A549 (cell line): ENCODE measurements at regions of chr17 and their contacts with region 1.

Region 1: GRCh38 chr17:64005734-64006167 is 7.6 kb downstream of the PRR29 start:
- DNase-seq: peak; percentile 56 to 64
- ATAC-seq: peak; percentile 22 to 66; a peak in 4 of 6 replicates
- H3K4me3 ChIP-seq: no peak overlapping the region
- H3K27ac ChIP-seq: peak overlapping the region in 1 of 2 experiments; percentile 49; a peak in 3 of 6 replicates
- H3K4me1 ChIP-seq: peaks cover 28% of the 10 kb centered on the region
- CTCF ChIP-seq: no peak
- EP300 ChIP-seq: 0 out of 5 replicates have a peak, but pooled peaks of 1 of the 2 experiments have one; percentile 11
- POLR2A ChIP-seq: no peak
- RAD21 ChIP-seq: no peak

Region 2: GRCh38 chr17:64020056-64020766 is 14.5 kb after region 1 on chr17 and contains the start of gene ICAM2:
- CTCF ChIA-PET with region 1: interaction called, 107 read pairs
- POLR2A ChIA-PET with region 1: no interaction called
- DNase-seq: no peak
- ATAC-seq: peak in 1 of 2 experiments; percentile 33; a peak in 2 of 6 replicates
- H3K4me3 ChIP-seq: no peak within 1 kb of the TSS
- H3K27ac ChIP-seq: no peak within 1 kb of the TSS
- H3K4me1 ChIP-seq: no peaks in the 10 kb centered on the region
- CTCF ChIP-seq: no peak
- EP300 ChIP-seq: no peak
- POLR2A ChIP-seq: no peak
- RAD21 ChIP-seq: no peak
- polyA plus RNA-seq, gene ICAM2: not detected in 2 replicates